PC-3 (cell line): ENCODE measurements at regions of chr1 and their contacts with region 1.

Region 1: DNA sequence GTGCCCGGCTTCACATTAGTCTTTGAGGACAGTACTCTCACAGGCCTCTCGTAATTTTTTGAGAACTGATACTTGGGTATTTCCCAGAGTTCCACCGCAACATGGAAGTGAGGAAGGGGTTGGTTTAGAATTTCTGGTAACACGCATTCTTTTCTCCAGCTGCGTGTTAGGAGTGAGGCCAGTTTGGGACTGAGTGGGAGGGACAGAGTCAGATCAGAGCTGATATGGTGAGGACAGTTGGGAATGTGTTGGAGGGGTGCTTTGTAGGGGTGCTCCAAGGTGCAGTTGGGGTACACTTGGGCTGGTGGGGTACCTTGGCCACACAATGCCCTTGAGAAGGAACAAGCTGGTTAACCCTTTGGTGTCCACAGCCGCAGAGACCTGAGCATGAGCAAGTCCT is 6.7 kb downstream of the FBXO6 start:
- DNase-seq: no peak
- ATAC-seq: no peak
- H3K4me3 ChIP-seq: no peak overlapping the region
- H3K27ac ChIP-seq: no peak overlapping the region
- H3K4me1 ChIP-seq: no peaks in the 10 kb centered on the region
- H3K27me3 ChIP-seq: no peaks in the 10 kb centered on the region
- CTCF ChIP-seq: no peak

Region 2: DNA sequence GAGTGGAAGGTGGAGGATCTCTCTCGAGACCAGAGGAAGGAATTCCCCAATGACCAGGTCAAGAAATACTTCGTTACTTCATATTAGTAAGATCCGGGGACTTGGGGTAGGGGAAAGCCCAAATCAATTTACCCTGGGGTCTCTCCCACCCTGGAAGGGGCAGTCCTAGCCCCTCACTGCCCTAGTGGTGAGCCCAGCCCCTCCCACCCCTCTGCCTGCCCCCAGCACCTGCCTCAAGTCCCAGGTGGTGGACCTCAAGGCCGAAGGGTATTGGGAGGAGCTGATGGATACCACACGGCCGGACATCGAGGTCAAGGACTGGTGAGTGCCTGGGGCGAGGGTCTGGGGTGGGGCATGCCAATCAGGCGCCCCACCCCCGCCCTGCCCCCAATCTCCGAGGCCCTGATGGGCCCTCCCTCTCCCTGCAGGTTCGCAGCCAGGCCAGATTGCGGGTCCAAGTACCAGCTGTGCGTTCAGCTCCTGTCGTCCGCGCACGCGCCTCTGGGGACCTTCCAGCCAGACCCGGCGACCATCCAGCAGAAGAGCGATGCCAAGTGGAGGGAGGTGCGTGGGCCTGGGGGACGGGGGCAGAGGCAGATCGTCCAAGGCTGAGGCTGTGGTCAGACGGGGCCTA is 12.3 kb before region 1 on chr1:
- CTCF ChIA-PET with region 1: interaction called, 15 read pairs
- POLR2A ChIA-PET with region 1: no interaction called
- intact Hi-C with region 1: no loop called
- DNase-seq: no peak
- ATAC-seq: no peak
- H3K4me3 ChIP-seq: no peak overlapping the region
- H3K27ac ChIP-seq: no peak overlapping the region
- H3K4me1 ChIP-seq: peaks cover 13% of the 10 kb centered on the region
- H3K27me3 ChIP-seq: no peaks in the 10 kb centered on the region
- CTCF ChIP-seq: no peak